ENCODE measurements at regions of chr6 and their contacts with region 1.

Region 1: DNA sequence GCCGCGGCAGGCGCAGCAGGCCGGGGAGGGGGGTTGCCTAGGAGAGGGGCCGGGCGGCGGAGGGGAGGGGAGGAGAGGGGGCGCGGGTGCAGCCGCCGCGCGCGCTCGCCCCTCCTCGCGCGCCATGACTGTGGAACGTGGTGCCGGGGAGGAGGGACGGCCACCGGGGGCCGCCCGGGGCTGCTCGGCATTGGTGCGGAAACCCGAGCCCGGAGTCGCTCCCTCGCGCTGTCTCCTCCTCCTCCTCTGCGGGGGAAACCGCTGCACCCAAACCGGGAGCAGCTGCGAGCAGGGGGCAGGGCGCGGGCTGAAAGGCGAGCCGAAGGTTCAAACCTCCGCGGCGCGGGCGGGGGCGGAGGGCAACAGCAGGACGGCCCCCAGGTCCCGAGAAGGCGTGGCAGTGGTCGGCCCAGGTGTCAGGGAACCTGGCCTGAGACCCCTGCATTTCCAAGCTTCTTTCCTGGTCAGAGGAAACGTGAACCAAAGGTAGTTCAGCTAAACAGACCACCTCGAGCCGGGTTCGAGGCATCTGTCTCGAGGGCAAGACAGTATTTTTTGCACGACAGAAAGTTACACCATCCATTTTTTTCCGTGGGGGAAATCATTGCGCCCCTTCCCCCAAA is 1.4 kb upstream of the TRERF1 start:
- DNase-seq: peak; percentile 36
- ATAC-seq: peak; percentile 78
- H3K4me3 ChIP-seq: peak overlapping the region; percentile 81 to 90
- H3K27ac ChIP-seq: peak overlapping the region; percentile 99
- H3K4me1 ChIP-seq: peaks cover 42% of the 10 kb centered on the region
- H3K27me3 ChIP-seq: no peaks in the 10 kb centered on the region
- CTCF ChIP-seq: no peak

Region 2: DNA sequence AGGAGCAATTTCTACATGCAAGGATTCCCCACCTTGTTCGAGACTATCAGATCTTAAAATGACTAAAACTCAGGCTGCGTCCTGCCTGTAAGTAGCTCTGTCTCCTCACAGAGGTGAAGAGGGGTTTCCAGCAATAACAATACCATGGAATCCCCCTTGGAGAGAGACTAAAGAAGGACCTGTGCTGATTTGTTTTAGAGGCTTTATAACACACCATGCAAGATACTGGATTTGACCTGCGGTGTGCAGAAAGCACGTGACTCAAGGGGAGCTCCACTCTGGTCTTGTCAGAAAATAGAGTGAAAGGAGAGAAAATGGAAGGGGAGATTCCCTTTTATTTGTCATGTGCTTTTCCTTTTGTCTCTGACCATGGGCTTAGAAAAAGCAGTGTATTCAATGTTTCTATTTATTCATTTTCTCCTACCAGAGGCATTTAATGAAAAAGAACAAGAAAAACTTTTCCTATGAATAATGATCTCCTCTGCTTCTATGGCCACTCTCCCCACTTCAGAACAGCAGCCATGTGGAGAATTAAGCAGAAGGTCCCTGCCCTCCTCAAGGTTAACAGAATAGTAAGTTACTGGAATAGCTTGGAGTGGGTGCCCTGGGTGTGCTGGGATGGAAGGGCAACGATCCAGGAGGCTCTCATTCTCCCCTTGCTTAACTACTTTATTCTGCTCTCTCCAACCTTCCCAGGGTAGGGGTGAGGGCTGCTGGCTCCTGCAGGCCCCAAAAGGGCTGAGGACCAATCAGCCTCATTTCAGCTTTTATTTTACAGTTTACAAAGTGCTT is 216.3 kb before region 1 on chr6:
- CTCF ChIA-PET with region 1: interaction called, 10 read pairs
- POLR2A ChIA-PET with region 1: no interaction called
- in situ Hi-C with region 1: no loop called
- intact Hi-C with region 1: no loop called
- DNase-seq: no peak
- ATAC-seq: no peak
- H3K4me3 ChIP-seq: no peak overlapping the region
- H3K27ac ChIP-seq: peak overlapping the region; percentile 36
- H3K4me1 ChIP-seq: peaks cover 11% of the 10 kb centered on the region
- H3K27me3 ChIP-seq: no peaks in the 10 kb centered on the region
- CTCF ChIP-seq: no peak

Region 3: DNA sequence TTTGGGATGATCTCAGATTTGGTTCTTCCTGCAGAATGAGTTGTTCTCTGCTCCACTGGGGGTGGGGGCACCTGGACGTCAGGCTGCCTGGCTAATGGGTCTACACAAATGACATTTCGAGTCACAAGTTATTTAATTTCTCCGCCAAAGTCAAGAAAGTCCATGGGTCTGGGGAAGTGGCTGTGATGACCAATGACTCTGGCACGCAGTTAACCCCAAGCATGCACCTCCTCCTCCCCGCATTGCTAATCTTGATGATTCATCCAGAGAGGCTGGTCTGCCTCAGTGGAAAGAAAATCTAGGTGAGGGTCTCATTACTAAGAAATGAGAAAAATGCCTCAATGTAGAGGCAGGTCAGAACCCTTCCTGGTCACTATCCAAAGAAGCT is 137.2 kb before region 1 on chr6:
- CTCF ChIA-PET with region 1: no interaction called
- POLR2A ChIA-PET with region 1: no interaction called
- in situ Hi-C with region 1: no loop called
- intact Hi-C with region 1: loop called (anchors 10 kb)
- DNase-seq: peak; percentile 96
- ATAC-seq: peak; percentile 86
- H3K4me3 ChIP-seq: no peak overlapping the region; a peak in 1 of 4 replicates
- H3K27ac ChIP-seq: peak overlapping the region; percentile 96
- H3K4me1 ChIP-seq: peaks cover 78% of the 10 kb centered on the region
- H3K27me3 ChIP-seq: no peaks in the 10 kb centered on the region
- CTCF ChIP-seq: no peak

Region 4: GRCh38 chr6:42406306-42407280 is 46.5 kb before region 1 on chr6:
- CTCF ChIA-PET with region 1: no interaction called
- POLR2A ChIA-PET with region 1: interaction called, 19 read pairs
- in situ Hi-C with region 1: no loop called
- intact Hi-C with region 1: no loop called
- DNase-seq: no peak
- ATAC-seq: no peak
- H3K4me3 ChIP-seq: no peak overlapping the region
- H3K27ac ChIP-seq: 0 out of 2 replicates have a peak overlapping the region, but pooled peaks have one; percentile 8
- H3K4me1 ChIP-seq: peaks cover 59% of the 10 kb centered on the region
- H3K27me3 ChIP-seq: no peaks in the 10 kb centered on the region
- CTCF ChIP-seq: no peak

Region 5: GRCh38 chr6:42471714-42472113 is 18.6 kb after region 1 on chr6:
- CTCF ChIA-PET with region 1: no interaction called
- POLR2A ChIA-PET with region 1: interaction called, 12 read pairs
- in situ Hi-C with region 1: no loop called
- intact Hi-C with region 1: no loop called
- DNase-seq: no peak
- ATAC-seq: no peak
- H3K4me3 ChIP-seq: no peak overlapping the region
- H3K27ac ChIP-seq: no peak overlapping the region
- H3K4me1 ChIP-seq: no peaks in the 10 kb centered on the region
- H3K27me3 ChIP-seq: no peaks in the 10 kb centered on the region
- CTCF ChIP-seq: no peak

Region 6: GRCh38 chr6:42520786-42521607 is 67.9 kb after region 1 on chr6:
- CTCF ChIA-PET with region 1: no interaction called
- POLR2A ChIA-PET with region 1: no interaction called
- in situ Hi-C with region 1: no loop called
- intact Hi-C with region 1: no loop called
- DNase-seq: no peak
- ATAC-seq: no peak
- H3K4me3 ChIP-seq: no peak overlapping the region
- H3K27ac ChIP-seq: no peak overlapping the region
- H3K4me1 ChIP-seq: no peaks in the 10 kb centered on the region
- H3K27me3 ChIP-seq: no peaks in the 10 kb centered on the region
- CTCF ChIP-seq: no peak

Region 7: GRCh38 chr6:42532038-42532669 is 79.0 kb after region 1 on chr6:
- CTCF ChIA-PET with region 1: interaction called, 4 read pairs
- POLR2A ChIA-PET with region 1: no interaction called
- in situ Hi-C with region 1: no loop called
- intact Hi-C with region 1: loop called (anchors 5 kb)
- DNase-seq: peak; percentile 35
- ATAC-seq: peak; percentile 94
- H3K4me3 ChIP-seq: no peak overlapping the region
- H3K27ac ChIP-seq: peak overlapping the region; percentile 58; the same call in 1 of the 2 replicates
- H3K4me1 ChIP-seq: no peaks in the 10 kb centered on the region; the same call in 1 of the 2 replicates
- H3K27me3 ChIP-seq: no peaks in the 10 kb centered on the region
- CTCF ChIP-seq: peak; percentile 86

Region 8: GRCh38 chr6:42547407-42548329 is 94.5 kb after region 1 on chr6:
- CTCF ChIA-PET with region 1: interaction called, 14 read pairs
- POLR2A ChIA-PET with region 1: interaction called, 4 read pairs
- in situ Hi-C with region 1: no loop called
- intact Hi-C with region 1: loop called (anchors 2 kb)
- DNase-seq: peak; percentile 70
- ATAC-seq: peak; percentile 99
- H3K4me3 ChIP-seq: peak overlapping the region; percentile 47 to 71
- H3K27ac ChIP-seq: peak overlapping the region; percentile 75
- H3K4me1 ChIP-seq: peaks cover 13% of the 10 kb centered on the region
- H3K27me3 ChIP-seq: no peaks in the 10 kb centered on the region
- CTCF ChIP-seq: peak; percentile 99

Region 9: DNA sequence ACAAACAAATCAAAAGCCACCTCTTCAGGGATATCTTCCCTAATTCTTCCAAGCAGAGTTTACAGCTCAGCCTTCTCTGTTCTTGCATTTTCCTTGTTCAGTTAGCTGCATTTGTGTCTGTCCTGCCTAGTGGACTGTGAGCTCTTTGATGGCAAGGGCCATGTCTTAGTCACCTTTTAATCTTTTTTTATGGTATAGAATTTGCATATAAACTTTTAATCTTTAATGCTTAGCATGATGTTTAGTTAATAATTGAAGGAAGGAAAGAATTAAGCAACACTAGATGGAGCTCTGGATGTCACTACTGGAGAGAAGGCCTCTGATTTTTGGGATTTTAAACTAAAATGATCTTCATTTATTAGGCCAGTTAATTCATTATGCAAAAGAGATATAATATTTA is 543.4 kb after region 1 on chr6:
- CTCF ChIA-PET with region 1: no interaction called
- POLR2A ChIA-PET with region 1: no interaction called
- in situ Hi-C with region 1: no loop called
- intact Hi-C with region 1: no loop called
- DNase-seq: no peak
- ATAC-seq: no peak
- H3K4me3 ChIP-seq: no peak overlapping the region
- H3K27ac ChIP-seq: no peak overlapping the region
- H3K4me1 ChIP-seq: no peaks in the 10 kb centered on the region
- H3K27me3 ChIP-seq: no peaks in the 10 kb centered on the region
- CTCF ChIP-seq: no peak

Region 10: DNA sequence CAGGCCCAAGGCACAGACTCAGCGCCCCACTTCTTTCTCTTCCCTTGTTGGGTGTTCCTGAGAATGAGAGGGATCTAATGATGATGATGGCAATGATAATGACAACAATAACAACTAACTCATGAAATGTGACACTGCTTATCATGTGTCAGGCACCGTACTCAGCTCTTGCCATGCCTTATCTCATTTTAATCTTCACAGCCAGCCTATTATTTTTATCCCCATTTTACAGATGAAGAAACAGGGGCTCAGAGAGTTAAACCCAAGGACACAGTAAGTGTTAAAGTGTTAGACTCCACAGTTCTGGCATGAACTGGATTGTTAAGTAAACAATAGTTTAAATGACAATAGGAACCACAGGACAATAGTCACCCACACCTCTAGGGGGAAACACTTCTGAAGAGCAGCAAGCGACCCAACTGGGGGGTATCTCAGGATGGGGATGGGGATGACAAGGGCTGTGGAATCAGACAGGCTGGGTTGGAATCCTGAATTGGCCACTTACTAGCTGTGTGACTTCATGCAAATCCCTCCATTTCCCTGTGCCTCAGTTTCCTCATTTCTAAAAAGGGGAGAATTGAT is 1204.2 kb after region 1 on chr6:
- CTCF ChIA-PET with region 1: no interaction called
- POLR2A ChIA-PET with region 1: no interaction called
- in situ Hi-C with region 1: no loop called
- intact Hi-C with region 1: no loop called
- DNase-seq: no peak
- ATAC-seq: no peak
- H3K4me3 ChIP-seq: no peak overlapping the region
- H3K27ac ChIP-seq: no peak overlapping the region
- H3K4me1 ChIP-seq: no peaks in the 10 kb centered on the region
- H3K27me3 ChIP-seq: no peaks in the 10 kb centered on the region
- CTCF ChIP-seq: no peak